Psoas muscle (tissue), 8 donors: ENCODE measurements at regions of chr14 and their contacts with region 1.

Region 1: GRCh38 chr14:69398053-69398817 is at the starts of genes ERH and SLC39A9:
- DNase-seq: peak; percentile 95 to 98
- ATAC-seq: peak; percentile 98 to 99 (median 98)
- H3K4me3 ChIP-seq: peak within 1 kb of the TSS; percentile 93
- H3K27ac ChIP-seq: peak within 1 kb of the TSS; percentile 94
- H3K4me1 ChIP-seq: peaks cover 39% of the 10 kb centered on the region
- H3K27me3 ChIP-seq: no peaks in the 10 kb centered on the region
- CTCF ChIP-seq: no peak
- total RNA-seq, gene ERH: 86.2 to 115 (median 103) TPM
- total RNA-seq, gene SLC39A9: 11.8 to 16.7 (median 14.9) TPM

Region 2: GRCh38 chr14:69153131-69153872 is 244.9 kb before region 1 on chr14:
- intact Hi-C with region 1: loop called in 1 of 2 experiments (anchors 10 kb)
- DNase-seq: peak; percentile 94 to 96
- ATAC-seq: peak; percentile 87 to 93 (median 92)
- H3K4me3 ChIP-seq: peak overlapping the region; percentile 98
- H3K27ac ChIP-seq: peak overlapping the region; percentile 97
- H3K4me1 ChIP-seq: peaks cover 23% of the 10 kb centered on the region
- H3K27me3 ChIP-seq: no peaks in the 10 kb centered on the region
- CTCF ChIP-seq: no peak

Region 3: GRCh38 chr14:69460093-69460701 is 62.0 kb after region 1 on chr14:
- intact Hi-C with region 1: loop called in 1 of 2 experiments (anchors 2 kb)
- DNase-seq: peak; percentile 63 to 67
- ATAC-seq: peak; percentile 91 to 98 (median 93)
- H3K4me3 ChIP-seq: no peak overlapping the region
- H3K27ac ChIP-seq: no peak overlapping the region
- H3K4me1 ChIP-seq: no peaks in the 10 kb centered on the region
- H3K27me3 ChIP-seq: no peaks in the 10 kb centered on the region
- CTCF ChIP-seq: peak; percentile 82